Stomach (tissue), 19 donors: ENCODE measurements at regions of chr7 and their contacts with region 1.

Region 1: GRCh38 chr7:74206589-74207120 is 3.2 kb upstream of the LAT2 start:
- DNase-seq: peak; percentile 92 to 93
- H3K4me3 ChIP-seq: peak overlapping the region; percentile 29 to 34 (median 32)
- H3K27ac ChIP-seq: no peak overlapping the region
- H3K4me1 ChIP-seq: peaks cover 0 to 34% (median 20%) of the 10 kb centered on the region in 4 donors
- H3K27me3 ChIP-seq: no peaks in the 10 kb centered on the region
- CTCF ChIP-seq: peak in 6 of 7 experiments; percentile 32 to 98 (median 96)
- EP300 ChIP-seq: no peak
- POLR2A ChIP-seq: no peak

Region 2: DNA sequence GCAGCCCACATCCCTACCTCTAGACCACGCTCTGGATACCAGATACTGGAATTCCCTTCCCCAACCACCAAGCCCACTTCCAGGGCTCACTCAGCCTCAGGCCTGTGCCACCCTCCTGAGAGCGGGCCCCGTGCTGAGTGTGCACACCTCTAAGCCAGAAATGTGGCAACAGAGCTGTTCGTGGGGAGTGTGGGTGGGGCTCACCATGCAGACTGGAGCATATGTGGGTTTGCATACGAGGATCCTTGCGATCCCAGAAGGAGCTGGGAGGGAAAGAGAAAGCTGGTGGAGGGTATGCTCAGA is 136.1 kb before region 1 on chr7:
- intact Hi-C with region 1: loop called (anchors 10 kb)
- DNase-seq: no peak
- H3K4me3 ChIP-seq: no peak overlapping the region
- H3K27ac ChIP-seq: no peak overlapping the region
- H3K4me1 ChIP-seq: peaks cover 0 to 9% (median 2%) of the 10 kb centered on the region in 4 donors
- H3K27me3 ChIP-seq: no peaks in the 10 kb centered on the region
- CTCF ChIP-seq: no peak
- EP300 ChIP-seq: no peak
- POLR2A ChIP-seq: no peak

Region 3: GRCh38 chr7:74401137-74401859 is 194.6 kb after region 1 on chr7:
- intact Hi-C with region 1: loop called (anchors 2 kb)
- DNase-seq: peak; percentile 78 to 86
- H3K4me3 ChIP-seq: no peak overlapping the region
- H3K27ac ChIP-seq: no peak overlapping the region
- H3K4me1 ChIP-seq: no peaks in the 10 kb centered on the region
- H3K27me3 ChIP-seq: no peaks in the 10 kb centered on the region
- CTCF ChIP-seq: peak in 6 of 7 experiments; percentile 25 to 99 (median 95)
- EP300 ChIP-seq: no peak
- POLR2A ChIP-seq: no peak